ENCODE measurements at regions of chr6 and their contacts with region 1.

Region 1: GRCh38 chr6:115896538-115897129 is 164.1 kb downstream of the FRK start:
- DNase-seq: no peak
- H3K4me3 ChIP-seq: no peak overlapping the region
- H3K27ac ChIP-seq: no peak overlapping the region
- H3K27me3 ChIP-seq: no peaks in the 10 kb centered on the region
- CTCF ChIP-seq: peak; percentile 86

Region 2: GRCh38 chr6:115602466-115602865 is 294.2 kb before region 1 on chr6:
- CTCF ChIA-PET with region 1: no interaction called
- POLR2A ChIA-PET with region 1: no interaction called
- DNase-seq: no peak
- H3K4me3 ChIP-seq: no peak overlapping the region
- H3K27ac ChIP-seq: no peak overlapping the region
- H3K27me3 ChIP-seq: no peaks in the 10 kb centered on the region
- CTCF ChIP-seq: no peak

Region 3: GRCh38 chr6:115885636-115886366 is 10.8 kb before region 1 on chr6:
- CTCF ChIA-PET with region 1: interaction called, 14 read pairs
- POLR2A ChIA-PET with region 1: no interaction called
- DNase-seq: no peak
- H3K4me3 ChIP-seq: no peak overlapping the region
- H3K27ac ChIP-seq: no peak overlapping the region
- H3K27me3 ChIP-seq: no peaks in the 10 kb centered on the region
- CTCF ChIP-seq: no peak

Region 4: DNA sequence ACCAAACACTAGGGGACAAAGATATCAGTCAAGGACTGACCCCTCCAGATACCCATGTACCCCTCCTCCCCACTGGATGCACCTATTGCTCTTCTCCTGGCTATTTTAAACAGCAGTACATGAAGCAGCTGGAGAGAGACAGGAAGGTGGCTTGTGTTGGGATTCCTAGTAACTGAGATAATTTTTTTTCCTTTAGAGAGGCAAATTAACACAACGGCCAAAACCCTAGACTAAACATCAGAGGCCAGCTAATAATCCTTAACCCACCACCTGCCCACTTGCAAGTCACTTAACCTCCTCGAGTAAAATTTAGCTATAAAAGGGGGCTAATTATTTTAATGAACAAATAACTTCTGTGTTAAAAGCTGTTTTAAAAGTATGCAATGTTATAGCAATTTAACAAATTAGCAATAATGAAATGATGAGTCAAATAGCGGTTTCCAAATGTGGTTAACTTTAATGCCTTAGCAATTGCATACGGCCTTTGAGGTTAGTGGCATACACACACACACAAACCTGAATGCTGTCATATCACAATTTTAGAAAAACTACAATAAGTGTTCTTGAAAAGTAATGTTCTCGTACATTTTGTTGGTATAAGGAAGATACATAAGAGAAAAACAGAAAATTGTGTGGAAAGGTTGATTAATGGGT is 12.4 kb after region 1 on chr6:
- CTCF ChIA-PET with region 1: interaction called, 10 read pairs
- POLR2A ChIA-PET with region 1: no interaction called
- DNase-seq: no peak
- H3K4me3 ChIP-seq: no peak overlapping the region
- H3K27ac ChIP-seq: no peak overlapping the region
- H3K27me3 ChIP-seq: peaks cover 3% of the 10 kb centered on the region
- CTCF ChIP-seq: no peak